Activated CD4-positive, alpha-beta memory T cell treated with anti-CD3 and anti-CD28 coated beads for 36 hours (primary cell): ENCODE measurements at regions of chr18 and their contacts with region 1.

Region 1: GRCh38 chr18:75070625-75071483 is 138.1 kb downstream of the PTGR3 start:
- DNase-seq: peak; percentile 87
- H3K4me3 Mint-ChIP-seq: peak overlapping the region; percentile 65
- H3K27ac Mint-ChIP-seq: peak overlapping the region; percentile 93
- H3K4me1 Mint-ChIP-seq: peaks cover 40% of the 10 kb centered on the region
- H3K27me3 Mint-ChIP-seq: no peaks in the 10 kb centered on the region

Region 2: GRCh38 chr18:74597662-74598349 is 473.0 kb before region 1 on chr18 and contains the start of gene ZNF407:
- CTCF ChIA-PET with region 1: no interaction called
- POLR2A ChIA-PET with region 1: no interaction called
- intact Hi-C with region 1: loop called (anchors 2 kb)
- DNase-seq: peak; percentile 91
- H3K4me3 Mint-ChIP-seq: peak within 1 kb of the TSS; percentile 96
- H3K27ac Mint-ChIP-seq: peak within 1 kb of the TSS; percentile 99
- H3K4me1 Mint-ChIP-seq: peaks cover 41% of the 10 kb centered on the region
- H3K27me3 Mint-ChIP-seq: no peaks in the 10 kb centered on the region
- total RNA-seq, gene ZNF407: 10.0 to 10.5 TPM

Region 3: GRCh38 chr18:74631623-74632283 is 439.1 kb before region 1 on chr18:
- CTCF ChIA-PET with region 1: no interaction called
- POLR2A ChIA-PET with region 1: no interaction called
- intact Hi-C with region 1: loop called (anchors 2 kb)
- DNase-seq: no peak
- H3K4me3 Mint-ChIP-seq: peak overlapping the region; percentile 40
- H3K27ac Mint-ChIP-seq: peak overlapping the region; percentile 83
- H3K4me1 Mint-ChIP-seq: peaks cover 46% of the 10 kb centered on the region
- H3K27me3 Mint-ChIP-seq: no peaks in the 10 kb centered on the region

Region 4: DNA sequence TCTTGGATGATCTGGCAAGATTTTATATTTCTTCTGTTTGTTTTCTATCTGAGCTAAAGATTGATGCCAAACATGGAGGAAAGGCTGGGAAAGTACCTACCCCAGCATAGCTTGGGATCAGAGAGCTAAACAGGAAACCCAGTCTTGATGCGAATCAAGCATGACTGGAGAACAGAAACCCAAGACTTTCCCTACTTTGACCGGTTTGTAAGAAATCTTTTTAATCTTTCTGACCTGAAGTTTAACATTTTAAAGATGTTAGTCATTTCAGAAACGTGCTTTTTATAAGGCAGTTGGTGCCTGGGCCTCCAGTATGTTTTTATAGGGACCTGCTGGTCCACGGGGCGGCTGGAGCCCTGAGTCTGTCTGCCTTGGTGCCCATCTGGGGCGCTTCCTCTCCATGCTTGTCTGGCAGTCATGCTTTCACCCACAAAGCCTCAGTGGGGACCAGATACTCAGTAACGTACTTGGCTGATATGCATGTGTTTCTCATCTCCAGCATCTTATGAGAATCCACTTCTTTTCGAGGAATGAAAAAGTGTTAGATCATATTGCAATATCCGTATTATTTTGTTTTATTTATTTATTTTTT is 128.4 kb before region 1 on chr18:
- CTCF ChIA-PET with region 1: no interaction called
- POLR2A ChIA-PET with region 1: no interaction called
- intact Hi-C with region 1: loop called (anchors 5 kb)
- DNase-seq: peak; percentile 61
- H3K4me3 Mint-ChIP-seq: peak overlapping the region; percentile 35
- H3K27ac Mint-ChIP-seq: no peak overlapping the region
- H3K4me1 Mint-ChIP-seq: peaks cover 16% of the 10 kb centered on the region
- H3K27me3 Mint-ChIP-seq: no peaks in the 10 kb centered on the region

Region 5: DNA sequence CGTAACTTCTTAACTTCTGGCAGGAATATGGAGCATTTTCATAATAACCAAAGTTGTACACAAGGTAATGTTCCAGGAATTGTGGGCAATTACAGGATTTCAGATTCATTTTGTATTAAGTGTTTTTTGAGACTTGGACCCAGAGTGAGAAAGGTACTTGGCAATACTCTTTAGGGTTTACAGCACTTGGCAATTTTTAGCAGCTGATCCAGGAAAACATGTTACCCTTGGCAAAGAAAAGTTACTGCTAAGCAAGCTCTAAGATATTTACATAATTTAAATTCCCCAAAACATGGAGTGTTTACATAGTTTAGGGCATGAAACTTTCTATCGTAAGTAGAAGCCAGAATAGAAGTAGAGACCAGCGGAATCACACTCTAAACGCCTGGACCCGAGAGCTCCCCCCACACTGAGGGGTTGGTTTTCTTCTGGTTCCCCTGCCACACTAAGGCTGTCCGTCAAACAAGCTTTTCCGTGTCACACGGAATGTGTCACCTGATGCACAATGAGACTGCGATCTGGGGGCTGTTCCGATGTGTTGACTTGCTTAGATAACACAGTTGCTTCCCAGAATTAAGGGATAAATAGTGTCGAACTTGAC is 39.0 kb before region 1 on chr18:
- CTCF ChIA-PET with region 1: no interaction called
- POLR2A ChIA-PET with region 1: no interaction called
- intact Hi-C with region 1: loop called (anchors 2 kb)
- DNase-seq: no peak
- H3K4me3 Mint-ChIP-seq: no peak overlapping the region
- H3K27ac Mint-ChIP-seq: no peak overlapping the region
- H3K4me1 Mint-ChIP-seq: peaks cover 21% of the 10 kb centered on the region
- H3K27me3 Mint-ChIP-seq: no peaks in the 10 kb centered on the region

Region 6: GRCh38 chr18:75088622-75089211 is 17.9 kb after region 1 on chr18:
- CTCF ChIA-PET with region 1: no interaction called
- POLR2A ChIA-PET with region 1: no interaction called
- intact Hi-C with region 1: no loop called
- DNase-seq: no peak
- H3K4me3 Mint-ChIP-seq: no peak overlapping the region
- H3K27ac Mint-ChIP-seq: no peak overlapping the region
- H3K4me1 Mint-ChIP-seq: no peaks in the 10 kb centered on the region
- H3K27me3 Mint-ChIP-seq: no peaks in the 10 kb centered on the region

Region 7: GRCh38 chr18:76374330-76375281 is 1303.8 kb after region 1 on chr18:
- CTCF ChIA-PET with region 1: no interaction called
- POLR2A ChIA-PET with region 1: no interaction called
- intact Hi-C with region 1: loop called (anchors 2 kb)
- DNase-seq: peak; percentile 75
- H3K4me3 Mint-ChIP-seq: no peak overlapping the region
- H3K27ac Mint-ChIP-seq: peak overlapping the region; percentile 64
- H3K4me1 Mint-ChIP-seq: peaks cover 50% of the 10 kb centered on the region
- H3K27me3 Mint-ChIP-seq: peaks cover 1% of the 10 kb centered on the region